ENCODE measurements at regions of chr2 and their contacts with region 1.

Region 1: GRCh38 chr2:7014174-7014640 is 97.0 kb downstream of the RNF144A start:
- DNase-seq: no peak
- ATAC-seq: peak; percentile 86
- H3K4me3 ChIP-seq: no peak overlapping the region
- H3K27ac ChIP-seq: no peak overlapping the region
- H3K4me1 ChIP-seq: no peaks in the 10 kb centered on the region
- H3K27me3 ChIP-seq: no peaks in the 10 kb centered on the region; a peak in 1 of 4 replicates
- CTCF ChIP-seq: peak; percentile 37 to 61 (median 58); a peak in 5 of 6 replicates
- EP300 ChIP-seq: no peak
- POLR2A ChIP-seq: no peak
- RAD21 ChIP-seq: peak; percentile 42

Region 2: GRCh38 chr2:6999211-6999877 is 14.9 kb before region 1 on chr2:
- CTCF ChIA-PET with region 1: interaction called, 78 read pairs
- POLR2A ChIA-PET with region 1: interaction called, 4 read pairs
- RAD21 ChIA-PET with region 1: interaction called, 9 read pairs
- SMC1A ChIA-PET with region 1: interaction called, 37 read pairs
- in situ Hi-C with region 1: no loop called
- intact Hi-C with region 1: no loop called
- DNase-seq: peak; percentile 37
- ATAC-seq: peak; percentile 97
- H3K4me3 ChIP-seq: peak overlapping the region; percentile 7; the same call in 1 of the 2 replicates
- H3K27ac ChIP-seq: peak overlapping the region; percentile 42; the same call in 1 of the 2 replicates
- H3K4me1 ChIP-seq: peaks cover 17% of the 10 kb centered on the region
- H3K27me3 ChIP-seq: no peaks in the 10 kb centered on the region
- CTCF ChIP-seq: no peak
- EP300 ChIP-seq: no peak
- POLR2A ChIP-seq: no peak
- RAD21 ChIP-seq: no peak